Lower leg skin (tissue), 4 donors: ENCODE measurements at regions of chr5 and their contacts with region 1.

Region 1: DNA sequence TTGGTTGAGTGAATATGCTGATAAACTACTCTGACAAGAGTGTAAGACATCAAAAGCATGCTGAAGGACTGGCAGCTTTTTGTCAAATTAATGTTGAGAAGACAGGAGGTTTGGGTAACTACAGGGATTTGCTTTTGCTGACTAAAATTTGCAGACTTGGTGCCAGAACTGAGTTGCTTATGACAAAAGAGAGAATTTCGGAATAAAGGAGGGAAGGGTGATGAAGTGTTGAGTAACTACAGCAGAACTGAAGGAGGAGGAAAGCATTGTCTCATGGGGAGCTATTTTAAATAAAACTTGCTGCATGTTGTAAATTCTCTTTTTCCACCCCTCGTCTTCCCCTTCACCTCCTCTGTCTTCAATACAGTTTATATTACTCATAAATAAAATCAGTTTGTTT is 296.1 kb downstream of the YTHDC2 start:
- DNase-seq: no peak
- H3K4me3 ChIP-seq: no peak overlapping the region
- CTCF ChIP-seq: no peak
- POLR2A ChIP-seq: no peak

Region 2: DNA sequence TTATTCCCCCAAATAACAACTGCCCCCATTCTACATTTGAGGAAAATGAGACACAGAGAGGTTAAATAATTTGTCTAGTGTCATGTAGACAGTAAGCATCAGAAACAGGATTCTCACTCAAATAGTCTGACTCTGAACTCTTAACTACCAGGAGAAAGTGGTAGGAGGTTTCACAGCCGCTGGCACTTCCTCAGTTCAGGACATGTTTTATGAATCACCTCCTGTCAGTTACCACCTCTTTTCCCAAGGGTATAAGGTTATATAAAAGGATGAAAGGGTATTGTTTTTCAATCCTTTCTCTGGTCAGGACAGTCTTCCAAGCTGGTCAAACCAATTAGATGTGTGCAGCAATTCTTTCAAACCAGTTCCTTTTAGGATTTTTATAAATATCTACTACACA is 426.9 kb before region 1 on chr5:
- intact Hi-C with region 1: no loop called
- DNase-seq: no peak
- H3K4me3 ChIP-seq: no peak overlapping the region
- CTCF ChIP-seq: no peak
- POLR2A ChIP-seq: no peak

Region 3: GRCh38 chr5:113606298-113607134 is 203.1 kb before region 1 on chr5:
- intact Hi-C with region 1: no loop called
- DNase-seq: peak in 1 of 2 donors; percentile 48
- H3K4me3 ChIP-seq: no peak overlapping the region
- CTCF ChIP-seq: no peak
- POLR2A ChIP-seq: no peak

Region 4: DNA sequence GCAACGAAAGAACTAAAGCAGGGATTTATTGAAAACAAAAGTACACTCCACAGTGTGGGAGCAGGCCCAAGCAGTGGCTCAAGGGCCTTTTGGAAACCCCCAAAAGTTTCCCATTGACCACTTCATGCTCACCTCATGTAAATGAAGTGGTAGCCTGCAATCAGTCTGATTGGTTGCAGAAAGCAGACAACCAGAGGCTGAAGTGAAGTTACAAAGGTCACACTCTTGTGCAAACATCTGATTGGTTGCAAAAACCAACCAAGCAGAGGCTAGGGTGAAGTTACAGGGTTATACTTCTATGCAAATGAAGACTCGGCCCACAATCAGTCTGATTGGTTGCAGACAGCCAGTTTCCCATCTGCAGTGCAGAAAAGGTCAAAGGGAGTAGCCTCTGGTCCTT is 38.1 kb before region 1 on chr5:
- intact Hi-C with region 1: loop called (anchors 2 kb)
- DNase-seq: no peak
- H3K4me3 ChIP-seq: no peak overlapping the region
- CTCF ChIP-seq: no peak
- POLR2A ChIP-seq: no peak

Region 5: GRCh38 chr5:114089259-114089658 is 279.6 kb after region 1 on chr5:
- intact Hi-C with region 1: no loop called
- DNase-seq: no peak
- H3K4me3 ChIP-seq: no peak overlapping the region
- CTCF ChIP-seq: no peak
- POLR2A ChIP-seq: no peak